ENCODE measurements at regions of chr6 and their contacts with region 1.

Region 1: DNA sequence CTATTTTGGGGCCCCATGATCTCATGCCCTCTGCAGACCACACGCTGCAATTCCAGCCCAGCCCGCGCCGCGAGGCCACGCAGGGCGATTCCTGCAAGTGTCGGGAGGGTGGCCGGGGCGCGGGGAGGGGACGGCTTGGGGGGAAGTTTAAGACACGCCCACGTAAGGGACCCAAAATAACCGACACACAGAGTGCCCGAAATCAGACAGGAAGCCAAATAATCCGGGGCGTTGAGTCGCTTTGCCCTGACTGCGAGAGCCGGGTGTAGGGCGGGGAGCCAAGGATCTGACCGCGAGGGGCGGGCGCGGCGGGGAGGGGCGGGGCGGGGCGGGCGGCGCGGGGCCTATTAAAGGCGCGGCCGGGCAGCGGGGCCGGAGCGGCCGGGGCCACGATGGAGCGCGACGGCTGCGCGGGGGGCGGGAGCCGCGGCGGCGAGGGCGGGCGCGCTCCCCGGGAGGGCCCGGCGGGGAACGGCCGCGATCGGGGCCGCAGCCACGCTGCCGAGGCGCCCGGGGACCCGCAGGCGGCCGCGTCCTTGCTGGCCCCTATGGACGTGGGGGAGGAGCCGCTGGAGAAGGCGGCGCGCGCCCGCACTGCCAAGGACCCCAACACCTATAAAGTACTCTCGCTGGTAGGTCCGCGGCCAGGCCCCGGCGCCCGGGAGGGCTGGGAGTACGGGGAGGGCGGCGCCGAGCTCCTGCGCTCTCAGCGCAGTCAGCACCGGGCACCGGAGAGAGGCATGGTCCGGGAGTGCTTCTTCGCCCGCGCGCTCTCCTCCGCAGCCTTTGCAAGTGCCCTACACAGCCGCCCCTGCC is at the start of gene ENPP1:
- DNase-seq: peak; percentile 62
- ATAC-seq: peak; percentile 89
- H3K4me3 ChIP-seq: peak within 1 kb of the TSS; percentile 74
- H3K27ac ChIP-seq: peak within 1 kb of the TSS; percentile 64
- H3K4me1 ChIP-seq: no peaks in the 10 kb centered on the region
- H3K27me3 ChIP-seq: no peaks in the 10 kb centered on the region
- CTCF ChIP-seq: no peak; the same call in 1 of the 2 replicates
- POLR2A ChIP-seq: 0 out of 2 replicates have a peak, but pooled peaks have one; percentile 27
- RAD21 ChIP-seq: peak; percentile 29; the same call in 1 of the 2 replicates
- total RNA-seq, gene ENPP1: 38.9 and 39.4 TPM in 2 replicates

Region 2: DNA sequence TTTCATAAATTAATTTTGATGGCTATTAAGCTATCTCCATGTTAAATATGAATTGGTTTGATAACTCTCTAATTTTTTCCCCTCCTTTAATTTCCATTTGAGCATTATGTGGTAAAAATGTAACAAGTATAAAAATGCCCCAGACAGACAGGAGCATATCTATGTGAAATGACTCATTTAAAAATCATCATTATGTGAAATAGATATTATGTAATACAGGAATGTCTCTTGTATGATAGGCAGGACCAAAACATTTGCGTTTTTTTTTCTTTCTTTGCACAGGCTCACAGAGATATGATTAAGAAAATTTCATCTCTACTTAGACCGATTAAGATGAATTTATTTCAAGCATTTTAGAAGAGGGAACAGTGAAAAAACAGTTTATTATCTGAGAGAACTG is 576.7 kb before region 1 on chr6:
- CTCF ChIA-PET with region 1: no interaction called
- POLR2A ChIA-PET with region 1: no interaction called
- dilution Hi-C with region 1: no loop called
- in situ Hi-C with region 1: no loop called
- intact Hi-C with region 1: no loop called
- DNase-seq: peak; percentile 22
- ATAC-seq: no peak
- H3K4me3 ChIP-seq: no peak overlapping the region
- H3K27ac ChIP-seq: no peak overlapping the region
- H3K4me1 ChIP-seq: no peaks in the 10 kb centered on the region
- H3K27me3 ChIP-seq: no peaks in the 10 kb centered on the region
- CTCF ChIP-seq: no peak
- POLR2A ChIP-seq: no peak
- RAD21 ChIP-seq: no peak

Region 3: DNA sequence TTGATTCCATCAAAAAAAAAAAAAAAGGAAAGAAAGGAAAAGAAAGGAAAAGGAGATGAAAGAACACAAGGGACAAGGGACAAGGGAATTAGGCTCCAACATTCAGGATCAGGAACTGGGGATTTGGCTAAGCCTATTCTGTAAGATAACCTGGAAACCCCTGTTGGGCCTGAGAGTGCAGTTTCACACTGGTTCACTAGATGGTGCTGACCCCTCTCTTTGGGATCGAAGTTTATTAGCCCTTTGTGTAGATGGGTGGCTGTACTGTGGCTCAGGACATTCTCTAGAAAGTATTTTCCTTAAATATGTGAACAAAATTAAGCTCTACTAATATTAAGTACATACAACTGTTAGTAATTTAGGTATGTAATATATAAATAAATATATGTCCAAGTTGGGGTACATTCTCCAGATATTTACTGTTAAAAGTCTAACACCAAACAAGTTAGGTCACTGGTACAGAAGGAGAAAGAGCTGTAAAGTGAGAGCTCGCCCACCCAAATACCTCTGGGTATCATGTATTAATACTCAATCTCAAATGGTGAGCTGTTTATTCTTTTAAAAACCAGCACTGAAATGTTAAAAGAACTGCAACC is 112.9 kb before region 1 on chr6:
- CTCF ChIA-PET with region 1: interaction called, 3 read pairs
- POLR2A ChIA-PET with region 1: no interaction called
- dilution Hi-C with region 1: no loop called
- in situ Hi-C with region 1: no loop called
- intact Hi-C with region 1: loop called (anchors 10 kb)
- DNase-seq: peak; percentile 79
- ATAC-seq: peak; percentile 100
- H3K4me3 ChIP-seq: no peak overlapping the region
- H3K27ac ChIP-seq: no peak overlapping the region
- H3K4me1 ChIP-seq: no peaks in the 10 kb centered on the region
- H3K27me3 ChIP-seq: no peaks in the 10 kb centered on the region; the same call in 1 of the 2 replicates
- CTCF ChIP-seq: peak; percentile 94
- POLR2A ChIP-seq: no peak
- RAD21 ChIP-seq: peak; percentile 96

Region 4: DNA sequence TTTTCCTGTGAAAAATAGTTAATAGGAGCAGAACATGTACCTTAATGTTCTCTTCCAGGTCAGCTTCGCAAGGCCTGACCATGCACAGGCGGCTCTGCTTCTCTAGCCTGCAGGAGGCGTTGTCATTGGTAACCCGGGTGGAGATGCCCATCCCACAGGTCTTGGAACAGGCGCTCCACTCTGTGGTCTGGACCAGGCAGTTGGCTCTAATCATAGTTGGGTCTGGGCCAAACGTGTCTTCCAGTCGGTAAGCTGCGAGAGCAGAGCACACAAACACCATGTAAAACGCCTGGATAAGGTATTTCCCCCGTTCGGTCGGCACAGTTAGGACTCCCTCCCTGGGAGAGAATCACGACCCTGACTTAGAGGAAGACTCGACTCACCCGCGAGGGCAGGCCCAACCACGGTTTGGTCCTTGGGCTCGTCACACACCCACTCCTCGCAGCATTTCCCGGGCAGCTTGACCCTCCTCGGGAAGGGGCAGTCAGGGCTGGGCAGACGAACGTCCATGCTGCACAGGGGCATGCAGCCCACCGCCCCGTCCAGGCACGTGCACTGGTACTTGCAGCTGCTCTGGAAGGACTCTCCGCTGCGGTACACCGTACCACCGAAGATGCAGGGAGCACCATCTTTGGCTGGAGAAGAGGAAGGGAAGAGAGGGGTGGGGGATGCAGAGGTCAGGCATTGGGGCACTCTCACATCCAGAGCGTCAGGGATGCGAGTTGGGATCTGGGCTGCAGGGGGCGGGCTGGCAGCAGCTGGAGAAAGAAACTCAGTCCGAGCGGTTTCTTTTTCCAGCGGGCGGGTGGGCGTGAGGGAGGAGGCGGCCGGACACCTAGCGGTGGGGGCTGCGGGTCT is 142.3 kb after region 1 on chr6:
- CTCF ChIA-PET with region 1: no interaction called
- POLR2A ChIA-PET with region 1: no interaction called
- dilution Hi-C with region 1: no loop called
- in situ Hi-C with region 1: no loop called
- intact Hi-C with region 1: no loop called
- DNase-seq: peak; percentile 92
- ATAC-seq: peak; percentile 9
- H3K4me3 ChIP-seq: peak overlapping the region; percentile 66
- H3K27ac ChIP-seq: peak overlapping the region; percentile 83
- H3K4me1 ChIP-seq: peaks cover 10% of the 10 kb centered on the region
- H3K27me3 ChIP-seq: no peaks in the 10 kb centered on the region
- CTCF ChIP-seq: peak; percentile 48
- POLR2A ChIP-seq: peak; percentile 57
- RAD21 ChIP-seq: peak; percentile 44

Measured in IMR-90 (cell line).